Right ventricle myocardium inferior (tissue), 1 donor: ENCODE measurements at regions of chr15 and their contacts with region 1.

Region 1: DNA sequence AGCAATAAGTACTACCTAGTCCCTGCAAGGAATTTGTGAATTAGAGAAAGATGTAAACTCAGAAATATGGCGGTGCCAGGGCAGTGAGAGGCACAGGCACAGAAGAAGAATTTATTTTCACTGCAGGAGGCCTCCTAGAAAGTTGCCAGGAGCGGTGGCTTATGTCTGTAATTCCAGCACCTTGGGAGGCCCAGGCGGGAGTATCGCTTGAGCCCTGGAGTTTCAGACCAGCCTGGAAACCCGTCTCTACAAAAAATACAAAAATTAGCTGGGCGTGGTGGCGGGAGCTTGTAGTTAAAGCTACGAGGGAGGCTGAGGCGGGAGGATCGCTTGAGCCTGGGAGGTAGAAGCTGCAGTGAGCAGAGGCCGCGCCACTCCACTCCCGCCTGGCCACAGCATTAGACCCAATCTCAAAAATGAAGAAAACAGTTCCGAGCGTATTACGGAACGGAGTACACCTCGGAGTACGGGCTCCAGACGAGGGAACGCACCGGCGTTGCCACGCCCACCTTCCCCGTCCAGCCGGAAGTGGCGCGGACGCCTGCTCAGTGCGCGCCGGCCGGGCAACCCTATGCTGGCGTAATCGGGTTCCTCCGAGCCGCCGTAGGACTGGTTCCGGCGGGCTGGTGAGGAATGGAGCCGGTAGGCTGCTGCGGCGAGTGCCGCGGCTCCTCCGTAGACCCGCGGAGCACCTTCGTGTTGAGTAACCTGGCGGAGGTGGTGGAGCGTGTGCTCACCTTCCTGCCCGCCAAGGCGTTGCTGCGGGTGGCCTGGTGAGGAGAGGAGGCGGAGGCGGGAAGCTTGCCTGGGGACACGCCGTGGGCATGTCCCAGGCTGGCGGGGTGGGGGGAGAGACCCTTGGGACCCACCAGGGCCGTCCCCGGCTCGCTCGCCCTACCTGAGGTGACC is at the start of gene FBXO22:
- DNase-seq: peak; percentile 97
- ATAC-seq: peak; percentile 99
- total RNA-seq, gene FBXO22: 19.2 TPM

Region 2: DNA sequence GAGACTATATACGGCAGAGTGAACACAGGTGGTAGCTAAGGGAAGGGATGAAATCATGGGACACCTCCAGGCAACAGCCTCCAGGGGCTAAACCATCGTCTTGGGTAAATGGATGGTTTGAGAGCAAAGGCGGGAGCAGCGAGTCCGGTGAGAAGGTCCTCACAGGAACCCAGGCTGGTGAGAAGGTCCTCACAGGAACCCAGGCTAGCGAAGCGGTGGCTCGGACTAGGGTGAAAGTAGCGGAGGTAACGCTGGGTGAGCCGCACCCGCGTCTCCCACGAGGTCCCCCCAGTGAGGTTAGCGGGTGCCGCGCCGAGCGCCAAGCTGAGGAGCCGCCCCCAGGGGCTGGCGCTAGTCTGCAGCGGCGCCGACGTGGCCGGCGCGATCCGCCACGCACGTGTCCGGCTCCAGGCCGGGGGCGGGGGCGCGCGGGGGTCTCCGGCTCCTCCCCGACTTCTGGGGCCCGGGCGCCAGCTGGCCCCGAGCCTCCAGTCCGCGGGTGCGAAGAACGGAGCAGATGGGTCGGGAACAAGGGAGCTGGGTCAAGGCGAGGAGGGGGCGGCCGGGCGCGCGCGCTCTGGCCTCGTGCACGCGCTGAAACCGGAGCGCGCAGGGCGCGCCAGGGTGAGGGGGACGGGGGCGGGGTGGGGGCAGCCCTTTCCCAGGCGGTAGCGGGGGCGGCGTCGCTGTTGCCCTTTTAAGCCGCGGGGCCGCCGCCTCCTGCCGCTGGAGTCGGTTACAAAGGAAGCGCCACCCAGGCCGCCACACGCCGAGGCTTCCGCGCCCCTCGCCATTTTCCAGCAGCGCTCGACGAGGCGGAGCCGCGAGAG is 60.6 kb before region 1 on chr15 and contains the start of gene UBE2Q2:
- intact Hi-C with region 1: loop called (anchors 5 kb)
- DNase-seq: peak; percentile 89
- ATAC-seq: peak; percentile 67
- total RNA-seq, gene UBE2Q2: 24.8 TPM

Region 3: GRCh38 chr15:75966073-75966472 is 62.5 kb after region 1 on chr15:
- intact Hi-C with region 1: no loop called
- DNase-seq: no peak
- ATAC-seq: no peak

Region 4: GRCh38 chr15:76012021-76012551 is 108.5 kb after region 1 on chr15 and contains the start of gene NRG4:
- intact Hi-C with region 1: no loop called
- DNase-seq: peak; percentile 53
- ATAC-seq: no peak
- total RNA-seq, gene NRG4: not detected